ENCODE measurements at regions of chr20 and their contacts with region 1.

Region 1: DNA sequence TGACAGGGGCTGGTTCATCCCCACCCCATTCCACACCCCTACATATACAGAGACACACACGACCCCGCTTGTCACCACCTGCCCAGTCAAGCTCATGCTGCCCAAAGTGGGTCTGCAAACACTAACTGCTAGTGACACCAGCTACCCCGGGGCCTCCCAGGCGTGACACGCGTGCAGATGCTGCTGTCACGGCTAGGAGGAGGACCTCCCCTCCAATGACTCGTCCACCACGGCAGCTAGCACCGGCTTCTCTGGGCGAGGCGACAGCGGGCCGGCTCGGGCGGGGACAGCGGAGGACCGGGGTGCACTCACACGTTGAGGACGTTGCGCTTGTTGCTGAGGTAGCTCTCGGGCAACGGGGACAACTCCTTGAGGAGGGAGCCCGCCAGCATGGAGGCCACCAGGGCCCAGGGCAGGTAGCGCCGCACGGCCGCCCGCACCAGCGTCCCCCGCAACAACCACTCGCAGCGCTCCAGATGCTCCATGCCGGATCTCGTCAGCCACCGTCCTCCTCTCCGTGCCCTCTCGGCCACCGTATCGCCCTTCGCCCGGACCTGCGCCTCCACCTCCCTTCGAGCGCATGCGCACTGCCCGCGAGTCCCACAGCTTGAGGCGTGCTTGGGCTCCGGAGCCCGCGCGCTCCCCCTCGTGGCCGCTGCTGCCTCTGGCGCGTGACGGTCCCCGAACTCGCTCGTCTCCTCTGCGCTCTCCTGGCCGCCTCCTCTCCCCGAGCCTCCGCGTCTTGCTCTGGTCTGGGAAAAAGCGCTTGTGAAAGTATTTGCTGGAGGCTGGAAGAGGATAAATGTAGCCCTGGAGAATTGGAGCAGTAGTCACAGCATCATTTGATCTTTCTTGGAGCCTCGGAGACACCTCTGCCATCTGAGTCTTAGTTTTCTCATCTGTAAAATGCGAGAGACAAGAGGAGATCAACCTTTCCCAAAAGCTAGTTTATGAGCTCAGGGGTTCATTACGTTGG is at the start of gene FITM2:
- DNase-seq: peak; percentile 99
- ATAC-seq: peak; percentile 96
- H3K4me3 Mint-ChIP-seq: peak within 1 kb of the TSS; percentile 86
- H3K27ac Mint-ChIP-seq: peak within 1 kb of the TSS; percentile 66
- H3K4me1 Mint-ChIP-seq: peaks cover 17% of the 10 kb centered on the region
- H3K27me3 Mint-ChIP-seq: no peaks in the 10 kb centered on the region
- total RNA-seq, gene FITM2: 2.1 to 2.2 TPM

Region 2: GRCh38 chr20:43456809-43457639 is 853.9 kb before region 1 on chr20:
- CTCF ChIA-PET with region 1: no interaction called
- POLR2A ChIA-PET with region 1: no interaction called
- intact Hi-C with region 1: loop called in 1 of 2 experiments (anchors 1 kb)
- DNase-seq: peak; percentile 92
- ATAC-seq: peak; percentile 86
- H3K4me3 Mint-ChIP-seq: peak overlapping the region; percentile 91
- H3K27ac Mint-ChIP-seq: peak overlapping the region; percentile 99
- H3K4me1 Mint-ChIP-seq: peaks cover 30% of the 10 kb centered on the region
- H3K27me3 Mint-ChIP-seq: peaks cover 2% of the 10 kb centered on the region

Region 3: GRCh38 chr20:44115762-44116644 is 194.9 kb before region 1 on chr20:
- CTCF ChIA-PET with region 1: no interaction called
- POLR2A ChIA-PET with region 1: no interaction called
- intact Hi-C with region 1: loop called (anchors 1 to 10 kb)
- DNase-seq: no peak
- ATAC-seq: no peak
- H3K4me3 Mint-ChIP-seq: no peak overlapping the region
- H3K27ac Mint-ChIP-seq: no peak overlapping the region
- H3K4me1 Mint-ChIP-seq: peaks cover 5% of the 10 kb centered on the region
- H3K27me3 Mint-ChIP-seq: peaks cover 23% of the 10 kb centered on the region

Region 4: DNA sequence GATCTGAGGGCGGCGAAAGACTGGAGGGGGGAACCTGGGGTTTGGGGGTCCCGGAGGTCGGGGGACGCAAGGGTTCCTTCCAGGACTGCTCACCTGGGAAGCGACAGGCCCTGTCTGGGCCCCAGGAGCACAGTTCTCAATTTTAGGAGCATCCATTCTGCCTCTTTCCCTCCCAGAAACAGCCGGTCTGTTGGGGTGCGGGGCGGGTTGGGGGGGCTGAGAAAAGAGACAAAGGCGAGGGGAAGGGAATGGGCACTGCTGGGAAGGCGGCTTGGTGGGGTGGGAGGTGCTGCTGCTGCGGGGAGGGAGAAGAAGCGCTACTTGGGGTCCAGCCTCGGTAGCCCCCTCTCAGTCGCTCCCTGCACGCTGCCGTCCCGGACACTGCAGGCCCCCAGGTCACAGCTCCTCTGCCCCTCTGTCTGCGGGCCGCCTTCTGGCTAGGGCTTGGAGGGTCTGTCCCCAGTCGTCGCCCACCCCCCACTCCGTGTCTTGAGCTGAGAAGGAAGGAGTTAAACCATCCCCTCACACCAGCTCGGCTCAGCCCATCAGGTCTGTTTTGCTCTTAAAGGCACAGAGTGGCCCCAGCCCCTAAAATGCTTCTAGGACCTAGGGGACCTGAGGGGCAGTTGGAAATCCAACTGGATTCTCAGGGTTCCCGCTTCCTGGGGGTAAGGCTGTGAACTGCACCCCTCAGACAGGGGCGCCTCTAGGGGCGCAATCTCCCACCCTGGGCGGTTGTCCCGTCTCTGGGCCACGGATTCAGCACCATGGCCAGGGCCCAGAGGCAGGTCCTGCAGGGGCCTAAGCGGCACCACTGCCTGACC is 63.2 kb before region 1 on chr20:
- CTCF ChIA-PET with region 1: interaction called, 12 read pairs
- POLR2A ChIA-PET with region 1: no interaction called
- intact Hi-C with region 1: no loop called
- DNase-seq: peak; percentile 55
- ATAC-seq: peak; percentile 51
- H3K4me3 Mint-ChIP-seq: no peak overlapping the region
- H3K27ac Mint-ChIP-seq: no peak overlapping the region
- H3K4me1 Mint-ChIP-seq: peaks cover 4% of the 10 kb centered on the region
- H3K27me3 Mint-ChIP-seq: peaks cover 11% of the 10 kb centered on the region

Region 5: GRCh38 chr20:44475694-44476560 is 165.0 kb after region 1 on chr20 and contains the start of gene TTPAL:
- CTCF ChIA-PET with region 1: no interaction called
- POLR2A ChIA-PET with region 1: no interaction called
- intact Hi-C with region 1: loop called in 1 of 2 experiments (anchors 2 kb)
- DNase-seq: peak; percentile 96
- ATAC-seq: peak; percentile 97
- H3K4me3 Mint-ChIP-seq: peak within 1 kb of the TSS; percentile 91
- H3K27ac Mint-ChIP-seq: peak within 1 kb of the TSS; percentile 97
- H3K4me1 Mint-ChIP-seq: peaks cover 22% of the 10 kb centered on the region
- H3K27me3 Mint-ChIP-seq: no peaks in the 10 kb centered on the region
- total RNA-seq, gene TTPAL: 18.3 to 21.5 TPM